ENCODE measurements at regions of chr12 and their contacts with region 1.

Region 1: GRCh38 chr12:76083904-76084862 is at the start of gene NAP1L1:
- DNase-seq: peak; percentile 96
- ATAC-seq: peak; percentile 81
- H3K4me3 Mint-ChIP-seq: peak within 1 kb of the TSS; percentile 99
- H3K27ac Mint-ChIP-seq: peak within 1 kb of the TSS; percentile 100
- H3K4me1 Mint-ChIP-seq: peaks cover 60% of the 10 kb centered on the region
- H3K27me3 Mint-ChIP-seq: no peaks in the 10 kb centered on the region
- CTCF ChIP-seq: no peak
- total RNA-seq, gene NAP1L1: 1,180 and 1,185 TPM in 2 replicates

Region 2: DNA sequence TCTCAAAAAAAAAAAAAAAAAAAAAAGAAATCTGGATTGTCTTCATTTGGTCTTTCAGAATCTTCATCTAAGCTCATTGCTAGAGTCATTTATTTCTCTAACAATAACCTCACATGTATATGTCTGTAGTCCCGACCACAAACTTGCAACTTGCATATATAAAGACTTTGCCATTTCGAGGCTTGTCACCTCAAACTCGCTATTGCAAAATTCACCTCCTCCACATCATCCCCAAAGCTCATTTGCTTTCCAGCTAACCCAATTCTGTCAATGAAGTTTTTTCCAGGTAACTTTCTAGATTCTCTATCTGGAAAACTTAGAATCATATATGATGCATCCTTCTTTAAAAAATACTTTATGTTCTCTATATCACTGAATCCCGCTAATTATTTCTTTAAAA is 1939.8 kb before region 1 on chr12:
- CTCF ChIA-PET with region 1: no interaction called
- POLR2A ChIA-PET with region 1: no interaction called
- intact Hi-C with region 1: no loop called
- DNase-seq: no peak
- ATAC-seq: no peak
- H3K4me3 Mint-ChIP-seq: no peak overlapping the region
- H3K27ac Mint-ChIP-seq: no peak overlapping the region
- H3K4me1 Mint-ChIP-seq: no peaks in the 10 kb centered on the region
- H3K27me3 Mint-ChIP-seq: no peaks in the 10 kb centered on the region
- CTCF ChIP-seq: no peak

Region 3: DNA sequence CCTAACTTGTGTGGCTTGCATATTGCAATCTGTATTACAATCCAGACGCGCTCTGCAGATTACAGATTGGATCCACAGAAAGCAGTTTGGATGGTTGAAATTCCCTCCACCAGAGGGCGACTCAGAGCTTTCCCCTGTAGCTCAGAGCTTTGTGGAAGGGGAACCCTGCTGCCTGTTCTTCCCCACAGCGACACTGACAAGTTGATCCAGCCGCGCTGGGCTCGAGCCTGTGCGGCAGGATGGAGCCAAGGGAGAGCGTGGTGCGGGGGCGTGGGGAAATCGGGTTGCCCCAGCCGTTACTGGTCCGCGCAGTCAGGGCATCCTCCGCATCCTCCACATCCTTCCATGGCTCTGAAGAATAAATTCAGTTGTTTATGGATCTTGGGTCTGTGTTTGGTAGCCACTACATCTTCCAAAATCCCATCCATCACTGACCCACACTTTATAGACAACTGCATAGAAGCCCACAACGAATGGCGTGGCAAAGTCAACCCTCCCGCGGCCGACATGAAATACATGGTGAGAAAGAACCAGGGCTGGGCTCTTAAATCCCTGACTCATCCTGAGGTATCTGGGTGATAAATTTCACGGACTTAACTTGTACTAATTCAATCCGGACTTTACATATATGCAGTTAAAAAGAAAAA is 749.7 kb before region 1 on chr12 and contains the start of gene GLIPR1L1:
- CTCF ChIA-PET with region 1: no interaction called
- POLR2A ChIA-PET with region 1: no interaction called
- intact Hi-C with region 1: loop called (anchors 5 kb)
- DNase-seq: peak; percentile 46
- ATAC-seq: peak; percentile 75
- H3K4me3 Mint-ChIP-seq: peak within 1 kb of the TSS; percentile 60
- H3K27ac Mint-ChIP-seq: no peak within 1 kb of the TSS
- H3K4me1 Mint-ChIP-seq: peaks cover 16% of the 10 kb centered on the region
- H3K27me3 Mint-ChIP-seq: peaks cover 23% of the 10 kb centered on the region
- CTCF ChIP-seq: peak; percentile 87
- total RNA-seq, gene GLIPR1L1: not detected in 2 replicates

Region 4: GRCh38 chr12:75511116-75512048 is 572.8 kb before region 1 on chr12 and contains the start of gene KRR1:
- CTCF ChIA-PET with region 1: no interaction called
- POLR2A ChIA-PET with region 1: interaction called, 13 read pairs
- intact Hi-C with region 1: loop called (anchors 1 kb)
- DNase-seq: peak; percentile 72
- ATAC-seq: peak; percentile 96
- H3K4me3 Mint-ChIP-seq: peak within 1 kb of the TSS; percentile 99
- H3K27ac Mint-ChIP-seq: peak within 1 kb of the TSS; percentile 99
- H3K4me1 Mint-ChIP-seq: peaks cover 27% of the 10 kb centered on the region
- H3K27me3 Mint-ChIP-seq: no peaks in the 10 kb centered on the region
- CTCF ChIP-seq: no peak
- total RNA-seq, gene KRR1: 75.0 and 85.1 TPM in 2 replicates

Region 5: DNA sequence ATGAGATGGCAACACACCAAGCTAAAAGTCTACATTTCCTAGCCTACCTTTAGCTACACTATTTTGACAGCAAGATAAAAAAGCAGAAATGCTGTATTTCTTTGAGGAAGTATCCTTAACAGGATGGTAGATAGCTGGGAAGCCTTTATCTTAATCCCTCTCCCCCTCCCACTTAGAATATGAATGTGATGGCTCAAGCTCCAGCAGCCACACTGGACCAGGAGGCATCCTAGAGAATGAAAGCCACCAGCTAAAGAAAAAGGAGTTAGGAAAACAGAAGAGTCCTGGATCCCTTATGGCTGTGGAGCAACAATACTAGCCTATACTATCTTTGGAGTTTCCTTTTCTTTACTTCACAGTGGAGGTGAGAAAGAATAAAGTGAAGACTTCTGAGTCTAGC is 14.8 kb before region 1 on chr12:
- CTCF ChIA-PET with region 1: no interaction called
- POLR2A ChIA-PET with region 1: interaction called, 3 read pairs
- intact Hi-C with region 1: loop called (anchors 2 kb)
- DNase-seq: no peak
- ATAC-seq: no peak
- H3K4me3 Mint-ChIP-seq: no peak overlapping the region
- H3K27ac Mint-ChIP-seq: no peak overlapping the region
- H3K4me1 Mint-ChIP-seq: peaks cover 33% of the 10 kb centered on the region
- H3K27me3 Mint-ChIP-seq: no peaks in the 10 kb centered on the region
- CTCF ChIP-seq: no peak

Region 6: DNA sequence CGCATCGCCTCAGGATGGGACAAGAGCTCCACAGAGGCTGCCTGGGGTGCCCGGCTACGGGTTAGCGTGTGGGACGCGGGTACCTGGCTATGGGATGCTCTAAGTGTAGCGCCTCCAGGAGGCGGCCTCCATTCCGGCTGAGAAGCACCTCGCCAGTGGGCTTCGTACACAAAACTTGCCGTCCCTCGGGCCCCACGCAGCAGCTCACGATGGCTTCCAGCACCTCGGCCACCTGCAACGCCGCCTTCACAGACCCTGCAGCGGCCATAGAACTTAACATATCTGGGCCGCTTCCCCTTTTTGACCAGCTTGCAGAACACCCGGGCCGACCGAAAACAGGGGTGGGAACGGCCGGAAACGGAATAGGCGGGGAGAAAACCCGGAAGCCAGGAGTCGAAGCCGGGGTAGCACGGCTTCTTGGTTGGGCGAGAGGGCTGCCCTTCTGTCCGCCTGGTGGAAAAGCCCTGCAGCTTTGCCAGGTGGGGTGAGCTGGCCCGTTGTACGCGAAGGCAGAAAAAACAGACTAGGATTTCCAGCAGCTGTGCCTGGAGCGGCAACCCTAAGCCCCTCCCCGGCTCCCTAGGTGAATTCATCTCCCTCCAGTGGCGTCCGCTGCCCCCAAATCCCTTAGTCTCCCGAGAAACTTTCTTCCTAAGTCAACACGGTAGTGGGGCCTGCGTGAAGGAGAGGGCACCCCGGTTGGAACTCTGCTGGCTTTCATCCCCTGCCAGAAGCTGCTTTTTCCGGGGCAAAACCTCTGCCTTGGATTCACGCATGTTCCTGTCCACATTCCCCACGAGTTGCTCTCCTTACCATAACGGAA is 264.1 kb after region 1 on chr12 and contains the start of gene BBS10:
- CTCF ChIA-PET with region 1: interaction called, 3 read pairs
- POLR2A ChIA-PET with region 1: interaction called, 26 read pairs
- intact Hi-C with region 1: loop called (anchors 1 kb)
- DNase-seq: peak; percentile 81
- ATAC-seq: peak; percentile 98
- H3K4me3 Mint-ChIP-seq: peak within 1 kb of the TSS; percentile 95
- H3K27ac Mint-ChIP-seq: peak within 1 kb of the TSS; percentile 93
- H3K4me1 Mint-ChIP-seq: peaks cover 35% of the 10 kb centered on the region
- H3K27me3 Mint-ChIP-seq: no peaks in the 10 kb centered on the region
- CTCF ChIP-seq: no peak
- total RNA-seq, gene BBS10: 7.9 and 8.0 TPM in 2 replicates

Region 7: GRCh38 chr12:76559400-76560085 is 475.4 kb after region 1 on chr12 and contains the start of gene OSBPL8:
- CTCF ChIA-PET with region 1: interaction called, 4 read pairs
- POLR2A ChIA-PET with region 1: interaction called, 8 read pairs
- intact Hi-C with region 1: loop called (anchors 1 kb)
- DNase-seq: peak; percentile 96
- ATAC-seq: peak; percentile 79
- H3K4me3 Mint-ChIP-seq: peak within 1 kb of the TSS; percentile 94
- H3K27ac Mint-ChIP-seq: peak within 1 kb of the TSS; percentile 95
- H3K4me1 Mint-ChIP-seq: peaks cover 45% of the 10 kb centered on the region
- H3K27me3 Mint-ChIP-seq: no peaks in the 10 kb centered on the region
- CTCF ChIP-seq: no peak
- total RNA-seq, gene OSBPL8: 73.8 and 79.6 TPM in 2 replicates

Region 8: GRCh38 chr12:76777765-76778216 is 693.6 kb after region 1 on chr12:
- CTCF ChIA-PET with region 1: no interaction called
- POLR2A ChIA-PET with region 1: no interaction called
- intact Hi-C with region 1: loop called (anchors 5 kb)
- DNase-seq: no peak
- ATAC-seq: peak; percentile 99
- H3K4me3 Mint-ChIP-seq: peak overlapping the region; percentile 24
- H3K27ac Mint-ChIP-seq: peak overlapping the region; percentile 79
- H3K4me1 Mint-ChIP-seq: peaks cover 60% of the 10 kb centered on the region
- H3K27me3 Mint-ChIP-seq: no peaks in the 10 kb centered on the region
- CTCF ChIP-seq: no peak

Measured in activated B cell treated with CpG ODN at 0.5 μM for 24 hours (primary cell).